CD8-positive, alpha-beta T cell (primary cell): ENCODE measurements at regions of chr1 and their contacts with region 1.

Region 1: GRCh38 chr1:219066631-219067349 is 106.9 kb upstream of the LYPLAL1 start:
- DNase-seq: no peak
- ATAC-seq: no peak
- H3K4me3 ChIP-seq: no peak overlapping the region
- H3K4me3 Mint-ChIP-seq: no peak overlapping the region
- H3K27ac ChIP-seq: no peak overlapping the region
- H3K27ac Mint-ChIP-seq: no peak overlapping the region
- H3K4me1 ChIP-seq: no peaks in the 10 kb centered on the region
- H3K4me1 Mint-ChIP-seq: no peaks in the 10 kb centered on the region
- H3K27me3 ChIP-seq: no peaks in the 10 kb centered on the region
- H3K27me3 Mint-ChIP-seq: no peaks in the 10 kb centered on the region
- CTCF ChIP-seq: no peak

Region 2: DNA sequence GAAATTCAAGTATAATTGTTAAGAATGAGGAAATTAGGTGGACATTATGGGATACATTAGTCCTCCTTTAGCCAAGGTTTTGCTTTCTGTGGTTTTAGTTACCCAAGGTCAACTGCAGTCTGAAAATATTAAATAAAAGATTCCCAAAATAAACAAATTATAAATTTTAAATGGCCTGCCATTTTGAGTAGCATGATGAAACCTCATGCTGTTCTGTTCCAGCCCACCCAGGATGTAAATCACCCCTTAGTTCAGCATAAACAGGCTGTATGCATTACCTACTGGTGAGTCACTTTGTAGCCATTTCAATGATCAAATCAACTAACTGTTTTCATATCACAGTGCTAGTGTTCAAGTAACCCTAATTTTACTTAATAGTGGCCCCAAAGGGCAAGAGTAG is 25.6 kb before region 1 on chr1:
- CTCF ChIA-PET with region 1: no interaction called
- POLR2A ChIA-PET with region 1: no interaction called
- intact Hi-C with region 1: no loop called
- DNase-seq: no peak
- ATAC-seq: no peak
- H3K4me3 ChIP-seq: no peak overlapping the region
- H3K4me3 Mint-ChIP-seq: no peak overlapping the region
- H3K27ac ChIP-seq: no peak overlapping the region
- H3K27ac Mint-ChIP-seq: no peak overlapping the region
- H3K4me1 ChIP-seq: no peaks in the 10 kb centered on the region
- H3K4me1 Mint-ChIP-seq: no peaks in the 10 kb centered on the region
- H3K27me3 ChIP-seq: no peaks in the 10 kb centered on the region
- H3K27me3 Mint-ChIP-seq: no peaks in the 10 kb centered on the region
- CTCF ChIP-seq: no peak

Region 3: DNA sequence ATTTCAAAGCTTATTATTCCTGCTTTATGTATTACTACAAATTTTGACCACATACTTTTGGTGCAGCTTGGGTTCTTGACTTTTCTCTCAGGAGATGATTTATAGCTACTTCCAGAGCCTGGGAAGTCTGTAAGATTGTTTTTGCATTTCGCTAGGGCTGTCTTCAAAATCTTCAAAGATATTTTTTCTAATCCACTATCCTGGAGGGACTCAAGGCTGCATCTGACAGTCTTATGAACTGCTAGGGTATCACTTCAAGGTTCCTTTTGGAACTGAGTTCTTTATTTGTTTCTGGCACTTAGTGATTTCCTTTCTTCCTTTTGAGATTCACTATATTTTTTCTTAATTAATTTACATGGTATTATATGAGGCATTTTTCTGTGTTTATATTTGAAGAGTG is 16.8 kb after region 1 on chr1:
- CTCF ChIA-PET with region 1: no interaction called
- POLR2A ChIA-PET with region 1: no interaction called
- intact Hi-C with region 1: loop called in 1 of 2 experiments (anchors 1 kb)
- DNase-seq: no peak
- ATAC-seq: no peak
- H3K4me3 ChIP-seq: no peak overlapping the region
- H3K4me3 Mint-ChIP-seq: no peak overlapping the region
- H3K27ac ChIP-seq: no peak overlapping the region
- H3K27ac Mint-ChIP-seq: no peak overlapping the region
- H3K4me1 ChIP-seq: no peaks in the 10 kb centered on the region
- H3K4me1 Mint-ChIP-seq: no peaks in the 10 kb centered on the region
- H3K27me3 ChIP-seq: no peaks in the 10 kb centered on the region
- H3K27me3 Mint-ChIP-seq: peaks cover 3% of the 10 kb centered on the region
- CTCF ChIP-seq: no peak

Region 4: DNA sequence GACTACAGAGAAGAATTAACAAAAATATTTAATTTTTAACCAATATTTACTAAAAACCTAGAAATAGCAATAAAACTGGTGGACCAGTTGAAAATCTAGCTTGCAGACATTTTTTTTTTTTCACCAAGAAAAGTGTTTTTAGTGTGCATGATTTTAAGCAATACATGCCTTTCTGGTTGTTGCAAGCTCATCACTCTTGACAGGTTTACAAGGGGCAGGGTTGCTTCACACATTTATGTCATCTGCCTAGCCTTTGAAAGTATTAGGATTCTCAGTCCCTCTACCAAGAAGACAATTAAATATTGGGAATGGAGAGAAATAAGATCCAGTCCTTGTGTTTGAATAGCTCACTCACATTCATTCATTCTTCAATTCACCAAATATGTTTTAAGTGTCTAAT is 53.0 kb after region 1 on chr1:
- CTCF ChIA-PET with region 1: no interaction called
- POLR2A ChIA-PET with region 1: no interaction called
- intact Hi-C with region 1: no loop called
- DNase-seq: no peak
- ATAC-seq: no peak
- H3K4me3 ChIP-seq: no peak overlapping the region
- H3K4me3 Mint-ChIP-seq: no peak overlapping the region
- H3K27ac ChIP-seq: no peak overlapping the region
- H3K27ac Mint-ChIP-seq: no peak overlapping the region
- H3K4me1 ChIP-seq: no peaks in the 10 kb centered on the region
- H3K4me1 Mint-ChIP-seq: no peaks in the 10 kb centered on the region
- H3K27me3 ChIP-seq: no peaks in the 10 kb centered on the region
- H3K27me3 Mint-ChIP-seq: no peaks in the 10 kb centered on the region
- CTCF ChIP-seq: no peak